Activated CD4-positive, alpha-beta T cell treated with anti-CD3 and anti-CD28 coated beads, Interleukin-2, amount 10 ng/mL, durations not matched to agents 24 days and 14 days (primary cell): ENCODE measurements at regions of chr14 and their contacts with region 1.

Region 1: DNA sequence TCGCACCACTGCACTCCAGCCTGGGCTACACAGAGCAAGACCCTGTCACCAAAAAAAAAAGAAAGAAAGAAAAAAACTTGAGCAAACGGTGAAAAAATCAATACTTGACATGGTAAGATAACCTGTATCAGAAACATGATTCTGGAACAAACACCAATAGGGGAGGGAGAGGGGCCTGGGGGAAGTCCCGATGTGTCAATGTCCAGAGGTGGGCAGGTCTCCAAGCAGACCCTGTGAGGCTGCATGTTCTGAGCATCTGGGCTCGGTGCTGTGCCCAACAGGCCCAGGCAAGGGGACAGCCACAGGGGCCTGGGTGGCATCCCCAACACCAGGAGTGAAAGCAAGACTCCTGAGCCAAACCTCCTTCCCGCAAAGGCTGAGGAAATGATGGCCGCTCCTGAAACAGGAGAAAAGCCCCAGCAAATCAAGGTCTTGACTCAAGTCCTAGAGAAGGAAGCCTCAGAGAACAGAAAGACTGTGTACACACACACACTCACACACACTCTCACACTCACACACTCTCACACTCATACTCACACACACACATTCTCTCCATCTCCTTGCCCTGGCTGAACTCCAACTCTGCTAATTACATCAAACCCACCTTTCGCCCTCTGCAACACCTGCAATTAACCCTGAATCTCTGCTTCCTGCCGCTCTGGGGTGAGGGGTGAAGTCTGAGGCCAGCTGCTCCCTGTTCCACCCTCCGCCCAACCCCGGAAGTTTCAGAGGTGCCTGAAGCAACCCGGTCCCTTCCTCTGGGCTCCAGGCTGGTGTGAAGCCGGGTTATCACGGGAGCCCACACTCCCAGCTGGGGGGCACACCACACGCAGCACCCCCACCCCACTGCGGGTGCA is 20.4 kb downstream of the CCDC88C start:
- DNase-seq: peak; percentile 91
- H3K4me3 Mint-ChIP-seq: peak overlapping the region; percentile 74
- H3K27ac Mint-ChIP-seq: peak overlapping the region; percentile 92
- H3K4me1 Mint-ChIP-seq: peaks cover 73% of the 10 kb centered on the region
- H3K27me3 Mint-ChIP-seq: no peaks in the 10 kb centered on the region

Region 2: DNA sequence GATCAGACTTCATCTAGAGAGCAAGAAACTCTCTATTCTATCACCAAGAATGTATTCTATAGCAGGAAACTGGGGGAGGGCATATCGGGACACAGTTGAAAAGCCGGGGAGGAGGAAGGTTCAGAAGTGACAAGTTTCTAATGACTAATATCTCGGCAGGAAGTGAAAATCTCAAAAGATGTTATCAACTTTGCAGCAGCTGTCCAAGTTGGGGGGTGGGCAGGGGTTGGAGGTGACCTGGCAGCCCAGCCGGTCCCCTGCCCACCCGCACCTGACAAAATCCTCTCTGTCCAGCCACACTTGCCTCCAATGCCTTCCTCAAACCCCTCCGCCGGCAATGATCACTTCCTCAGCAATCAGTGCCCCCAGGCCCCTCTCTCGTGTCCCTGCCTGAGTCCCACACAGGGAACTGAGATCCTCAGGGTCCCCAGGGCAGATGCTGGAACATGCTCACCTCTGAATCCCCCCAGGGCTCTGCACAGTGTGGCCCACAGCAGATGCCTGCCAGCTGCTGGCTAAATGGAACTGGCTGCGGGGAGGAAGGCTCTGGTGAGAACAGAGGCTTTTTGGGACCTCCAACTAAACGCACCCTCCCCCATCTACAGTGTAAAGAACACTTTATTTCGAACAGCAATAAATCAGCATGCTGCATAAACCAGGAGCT is 23.5 kb before region 1 on chr14:
- intact Hi-C with region 1: loop called (anchors 1 kb)
- DNase-seq: peak; percentile 84
- H3K4me3 Mint-ChIP-seq: peak overlapping the region; percentile 80
- H3K27ac Mint-ChIP-seq: peak overlapping the region; percentile 90
- H3K4me1 Mint-ChIP-seq: peaks cover 94% of the 10 kb centered on the region
- H3K27me3 Mint-ChIP-seq: no peaks in the 10 kb centered on the region

Region 3: GRCh38 chr14:91410771-91411536 is 13.8 kb after region 1 on chr14:
- intact Hi-C with region 1: loop called (anchors 2 kb)
- DNase-seq: peak; percentile 74
- H3K4me3 Mint-ChIP-seq: peak overlapping the region; percentile 64
- H3K27ac Mint-ChIP-seq: peak overlapping the region; percentile 82
- H3K4me1 Mint-ChIP-seq: peaks cover 84% of the 10 kb centered on the region
- H3K27me3 Mint-ChIP-seq: no peaks in the 10 kb centered on the region